Dorsolateral prefrontal cortex (tissue), 120 donors: ENCODE measurements at regions of chr6 and their contacts with region 1.

Region 1: DNA sequence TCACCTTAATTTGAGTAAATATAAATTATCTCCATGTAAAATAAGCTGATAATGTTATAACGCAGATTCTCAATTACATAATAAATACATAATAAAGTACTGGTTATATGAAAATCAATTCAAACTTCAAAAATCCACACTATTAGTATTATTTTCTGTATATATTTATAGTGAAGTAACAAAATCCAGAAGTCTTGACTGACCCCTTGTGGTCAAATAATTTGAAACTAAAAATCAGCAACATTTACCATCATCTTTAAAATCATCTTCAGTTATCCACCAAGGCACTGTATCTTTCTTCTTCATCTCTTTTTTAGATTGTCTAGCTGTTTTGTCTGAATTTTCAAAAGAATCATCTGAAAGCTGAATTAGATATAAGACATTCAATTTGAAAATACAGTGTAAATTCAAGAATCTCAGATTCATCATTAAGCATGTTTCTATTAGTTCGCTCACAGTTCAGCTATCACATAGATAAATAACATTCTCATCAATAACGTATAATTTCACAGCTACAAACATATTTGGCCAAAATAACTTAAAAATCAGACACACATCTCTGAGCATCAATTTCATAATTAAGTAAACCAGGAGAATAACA is 6.5 kb downstream of the CEP162 start:
- DNase-seq: no peak
- H3K4me3 ChIP-seq: no peak overlapping the region
- H3K27ac ChIP-seq: no peak overlapping the region
- H3K27me3 ChIP-seq: no peaks in the 10 kb centered on the region
- CTCF ChIP-seq: peak; percentile 51 to 92 (median 71)

Region 2: GRCh38 chr6:83613378-83613777 is 607.5 kb before region 1 on chr6:
- intact Hi-C with region 1: loop called (anchors 5 kb)
- DNase-seq: no peak
- H3K4me3 ChIP-seq: no peak overlapping the region
- H3K27ac ChIP-seq: no peak overlapping the region
- H3K27me3 ChIP-seq: no peaks in the 10 kb centered on the region
- CTCF ChIP-seq: no peak

Region 3: GRCh38 chr6:83824388-83824801 is 396.5 kb before region 1 on chr6:
- intact Hi-C with region 1: no loop called
- DNase-seq: no peak
- H3K4me3 ChIP-seq: no peak overlapping the region
- H3K27ac ChIP-seq: no peak overlapping the region
- H3K27me3 ChIP-seq: no peaks in the 10 kb centered on the region
- CTCF ChIP-seq: no peak

Region 4: DNA sequence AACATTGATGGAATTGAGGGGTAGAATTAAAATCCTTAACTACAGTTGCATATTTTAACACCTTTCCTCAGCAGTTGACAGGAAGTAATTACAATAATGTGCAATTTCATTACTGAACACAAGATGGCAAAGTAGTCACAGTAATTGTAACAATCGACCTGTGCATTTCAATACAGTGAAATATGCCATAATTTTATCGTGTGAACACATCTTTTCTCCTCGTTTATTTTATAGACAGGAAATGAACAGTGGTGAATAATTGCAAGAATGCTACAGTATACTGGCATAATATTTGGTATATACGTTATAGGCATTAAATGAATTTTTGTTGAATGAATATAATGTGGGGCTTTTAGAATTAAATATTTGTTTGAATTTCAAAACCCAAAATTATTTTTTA is 336.4 kb before region 1 on chr6:
- intact Hi-C with region 1: loop called (anchors 2 to 10 kb)
- DNase-seq: no peak
- H3K4me3 ChIP-seq: no peak overlapping the region
- H3K27ac ChIP-seq: no peak overlapping the region
- H3K27me3 ChIP-seq: no peaks in the 10 kb centered on the region
- CTCF ChIP-seq: peak; percentile 57 to 90 (median 75)

Region 5: GRCh38 chr6:84390334-84390733 is 169.4 kb after region 1 on chr6:
- intact Hi-C with region 1: no loop called
- DNase-seq: no peak
- H3K4me3 ChIP-seq: no peak overlapping the region
- H3K27ac ChIP-seq: no peak overlapping the region
- H3K27me3 ChIP-seq: peaks cover 0 to 21% (median 0%) of the 10 kb centered on the region in 45 donors
- CTCF ChIP-seq: no peak